ENCODE measurements at regions of chr12 and their contacts with region 1.

Region 1: GRCh38 chr12:52884526-52885293 is 20.2 kb downstream of the KRT8 start:
- DNase-seq: peak; percentile 74
- ATAC-seq: peak; percentile 73
- H3K4me3 ChIP-seq: no peak overlapping the region
- H3K4me3 Mint-ChIP-seq: no peak overlapping the region
- H3K27ac ChIP-seq: no peak overlapping the region
- H3K27ac Mint-ChIP-seq: no peak overlapping the region
- H3K4me1 ChIP-seq: peaks cover 5% of the 10 kb centered on the region in 2 donors
- H3K4me1 Mint-ChIP-seq: peaks cover 7% of the 10 kb centered on the region
- H3K27me3 ChIP-seq: peaks cover 0 to 19% (median 2%) of the 10 kb centered on the region in 4 experiments
- H3K27me3 Mint-ChIP-seq: peaks cover 31% of the 10 kb centered on the region
- CTCF ChIP-seq: peak; percentile 88

Region 2: GRCh38 chr12:52307836-52308805 is 576.6 kb before region 1 on chr12:
- CTCF ChIA-PET with region 1: no interaction called
- POLR2A ChIA-PET with region 1: no interaction called
- intact Hi-C with region 1: no loop called
- DNase-seq: no peak
- ATAC-seq: no peak
- H3K4me3 ChIP-seq: no peak overlapping the region
- H3K4me3 Mint-ChIP-seq: no peak overlapping the region
- H3K27ac ChIP-seq: no peak overlapping the region
- H3K27ac Mint-ChIP-seq: no peak overlapping the region
- H3K4me1 ChIP-seq: no peaks in the 10 kb centered on the region
- H3K4me1 Mint-ChIP-seq: peaks cover 3% of the 10 kb centered on the region
- H3K27me3 ChIP-seq: peaks cover 0 to 38% (median 11%) of the 10 kb centered on the region in 4 experiments
- H3K27me3 Mint-ChIP-seq: peaks cover 53% of the 10 kb centered on the region
- CTCF ChIP-seq: no peak

Region 3: GRCh38 chr12:52598966-52599365 is 285.7 kb before region 1 on chr12:
- CTCF ChIA-PET with region 1: no interaction called
- POLR2A ChIA-PET with region 1: no interaction called
- intact Hi-C with region 1: no loop called
- DNase-seq: no peak
- ATAC-seq: no peak
- H3K4me3 ChIP-seq: no peak overlapping the region
- H3K4me3 Mint-ChIP-seq: no peak overlapping the region
- H3K27ac ChIP-seq: no peak overlapping the region
- H3K27ac Mint-ChIP-seq: no peak overlapping the region
- H3K4me1 ChIP-seq: no peaks in the 10 kb centered on the region
- H3K4me1 Mint-ChIP-seq: no peaks in the 10 kb centered on the region
- H3K27me3 ChIP-seq: peaks cover 0 to 14% (median 6%) of the 10 kb centered on the region in 4 experiments
- H3K27me3 Mint-ChIP-seq: peaks cover 44% of the 10 kb centered on the region
- CTCF ChIP-seq: no peak

Region 4: GRCh38 chr12:52807544-52808470 is 76.9 kb before region 1 on chr12:
- CTCF ChIA-PET with region 1: no interaction called
- POLR2A ChIA-PET with region 1: no interaction called
- intact Hi-C with region 1: no loop called
- DNase-seq: no peak
- ATAC-seq: no peak
- H3K4me3 ChIP-seq: no peak overlapping the region
- H3K4me3 Mint-ChIP-seq: no peak overlapping the region
- H3K27ac ChIP-seq: no peak overlapping the region
- H3K27ac Mint-ChIP-seq: no peak overlapping the region
- H3K4me1 ChIP-seq: no peaks in the 10 kb centered on the region
- H3K4me1 Mint-ChIP-seq: no peaks in the 10 kb centered on the region
- H3K27me3 ChIP-seq: no peaks in the 10 kb centered on the region
- H3K27me3 Mint-ChIP-seq: peaks cover 28% of the 10 kb centered on the region
- CTCF ChIP-seq: no peak

Region 5: DNA sequence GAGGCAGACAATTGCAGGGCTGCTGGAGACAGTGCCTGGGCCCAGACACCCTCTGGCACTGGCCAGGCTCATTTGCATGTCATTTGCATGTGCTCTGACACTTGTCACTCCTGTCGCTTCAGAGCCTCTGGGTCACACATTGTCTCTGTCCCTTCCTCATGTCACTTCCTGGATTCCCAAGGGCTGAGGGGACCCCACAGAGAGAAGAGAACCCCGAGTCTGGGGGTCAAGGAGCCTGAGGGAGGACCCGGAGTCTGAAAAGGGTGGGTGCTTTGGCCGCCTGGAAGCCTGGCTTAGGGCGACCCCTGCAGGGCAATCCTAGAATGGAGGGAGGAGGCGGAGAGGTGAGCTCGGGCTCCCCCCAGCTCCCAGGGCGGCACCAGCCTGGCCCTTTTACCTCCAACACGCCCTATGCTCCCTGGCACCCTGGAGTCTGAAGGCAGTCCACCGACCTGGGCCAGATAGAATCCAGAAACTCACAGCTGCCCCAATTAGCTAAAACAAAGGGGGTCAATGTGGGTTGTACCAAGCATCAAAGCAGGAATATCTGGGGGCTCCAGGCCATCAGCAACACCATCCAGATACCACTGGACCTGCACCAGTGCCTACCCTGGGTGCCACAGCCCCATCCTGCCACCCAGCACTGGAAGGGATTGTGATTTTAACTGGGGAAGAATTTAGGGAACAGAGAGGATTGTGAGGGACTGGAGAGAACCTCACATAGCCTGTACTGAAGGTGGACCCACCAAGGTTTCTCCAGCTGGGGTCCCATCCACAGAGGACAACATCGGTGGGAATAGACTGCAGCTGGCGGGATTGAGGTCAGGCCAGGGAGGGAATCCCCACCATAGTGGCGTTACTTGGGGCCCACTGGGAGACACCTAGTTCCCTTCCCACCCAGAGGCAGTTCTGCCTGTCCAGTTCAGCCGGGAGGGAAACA is 14.1 kb before region 1 on chr12:
- CTCF ChIA-PET with region 1: interaction called, 22 read pairs
- POLR2A ChIA-PET with region 1: no interaction called
- intact Hi-C with region 1: no loop called
- DNase-seq: peak; percentile 73
- ATAC-seq: peak; percentile 51
- H3K4me3 ChIP-seq: no peak overlapping the region
- H3K4me3 Mint-ChIP-seq: peak overlapping the region; percentile 6
- H3K27ac ChIP-seq: no peak overlapping the region
- H3K27ac Mint-ChIP-seq: no peak overlapping the region
- H3K4me1 ChIP-seq: peaks cover 25 to 32% of the 10 kb centered on the region in 2 donors
- H3K4me1 Mint-ChIP-seq: peaks cover 37% of the 10 kb centered on the region
- H3K27me3 ChIP-seq: peaks cover 0 to 19% (median 4%) of the 10 kb centered on the region in 4 experiments
- H3K27me3 Mint-ChIP-seq: peaks cover 13% of the 10 kb centered on the region
- CTCF ChIP-seq: peak; percentile 75

Region 6: DNA sequence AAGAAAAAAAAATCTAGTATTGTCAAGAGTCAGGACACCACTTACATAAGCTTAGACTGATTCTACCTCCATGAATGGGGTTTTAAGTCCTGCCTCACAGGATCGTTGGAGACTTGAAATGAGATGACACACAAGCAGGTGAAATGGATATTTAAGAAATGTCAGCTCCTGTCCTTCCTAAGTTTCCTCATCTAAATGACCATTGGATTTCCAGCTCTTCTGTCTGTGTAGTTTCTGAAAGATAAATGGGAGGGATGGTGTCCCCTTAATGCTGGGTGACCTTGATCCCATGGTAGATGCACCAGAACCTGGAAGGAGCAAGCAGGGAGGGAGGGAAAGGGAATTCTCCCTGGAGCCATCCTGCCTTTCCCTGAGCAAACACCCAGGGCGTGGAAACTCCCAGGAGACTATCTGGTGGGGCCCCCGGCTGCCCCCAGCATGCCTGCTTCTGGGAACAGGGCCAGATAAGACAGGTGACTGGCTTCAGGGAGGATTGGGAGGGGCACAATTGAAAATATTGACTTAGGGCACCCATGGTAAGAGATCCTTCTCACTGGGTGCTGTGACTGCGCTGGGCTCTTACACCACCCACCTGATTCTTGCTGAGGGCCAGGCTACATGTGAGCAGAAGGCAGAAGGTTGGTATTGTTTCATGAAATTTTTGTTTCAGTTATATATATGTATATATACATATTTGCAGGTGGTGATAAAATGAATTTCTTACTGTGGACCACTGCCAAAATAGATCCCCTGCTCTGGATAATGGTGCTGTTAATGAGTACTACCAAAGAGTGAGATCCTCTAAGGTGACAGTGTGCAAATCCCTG is 10.6 kb after region 1 on chr12:
- CTCF ChIA-PET with region 1: interaction called, 29 read pairs
- POLR2A ChIA-PET with region 1: no interaction called
- intact Hi-C with region 1: no loop called
- DNase-seq: no peak
- ATAC-seq: no peak
- H3K4me3 ChIP-seq: no peak overlapping the region
- H3K4me3 Mint-ChIP-seq: no peak overlapping the region
- H3K27ac ChIP-seq: no peak overlapping the region
- H3K27ac Mint-ChIP-seq: no peak overlapping the region
- H3K4me1 ChIP-seq: no peaks in the 10 kb centered on the region
- H3K4me1 Mint-ChIP-seq: no peaks in the 10 kb centered on the region
- H3K27me3 ChIP-seq: peaks cover 0 to 2% (median 0%) of the 10 kb centered on the region in 4 experiments
- H3K27me3 Mint-ChIP-seq: peaks cover 15% of the 10 kb centered on the region
- CTCF ChIP-seq: no peak

Region 7: GRCh38 chr12:52900571-52901141 is 15.9 kb after region 1 on chr12:
- CTCF ChIA-PET with region 1: interaction called, 29 read pairs
- POLR2A ChIA-PET with region 1: no interaction called
- intact Hi-C with region 1: no loop called
- DNase-seq: no peak
- ATAC-seq: no peak
- H3K4me3 ChIP-seq: no peak overlapping the region
- H3K4me3 Mint-ChIP-seq: no peak overlapping the region
- H3K27ac ChIP-seq: no peak overlapping the region
- H3K27ac Mint-ChIP-seq: no peak overlapping the region
- H3K4me1 ChIP-seq: peaks cover 5 to 10% of the 10 kb centered on the region in 2 donors
- H3K4me1 Mint-ChIP-seq: peaks cover 3% of the 10 kb centered on the region
- H3K27me3 ChIP-seq: peaks cover 0 to 9% (median 2%) of the 10 kb centered on the region in 4 experiments
- H3K27me3 Mint-ChIP-seq: peaks cover 19% of the 10 kb centered on the region
- CTCF ChIP-seq: no peak

Region 8: DNA sequence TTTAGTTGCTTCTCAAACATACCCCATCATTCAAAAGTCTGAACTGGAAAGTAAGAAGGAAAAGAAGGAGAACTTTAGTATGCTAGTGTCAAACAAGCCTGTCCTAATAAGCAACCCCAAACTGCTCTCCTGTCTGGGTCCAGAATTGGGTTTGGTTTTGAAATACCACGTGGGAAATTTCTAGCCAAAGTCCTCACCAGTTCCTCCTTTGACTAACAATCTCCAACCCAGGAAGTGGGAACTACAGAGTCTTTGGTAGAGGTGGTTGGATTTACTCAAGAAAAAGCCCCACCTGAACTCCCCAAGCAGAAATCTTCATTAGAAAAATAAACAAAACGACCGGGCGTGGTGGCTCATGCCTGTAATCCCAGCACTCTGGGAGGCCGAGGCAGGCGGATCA is 104.2 kb after region 1 on chr12:
- CTCF ChIA-PET with region 1: interaction called, 22 read pairs
- POLR2A ChIA-PET with region 1: no interaction called
- intact Hi-C with region 1: no loop called
- DNase-seq: no peak
- ATAC-seq: no peak
- H3K4me3 ChIP-seq: no peak overlapping the region
- H3K4me3 Mint-ChIP-seq: no peak overlapping the region
- H3K27ac ChIP-seq: no peak overlapping the region
- H3K27ac Mint-ChIP-seq: no peak overlapping the region
- H3K4me1 ChIP-seq: no peaks in the 10 kb centered on the region
- H3K4me1 Mint-ChIP-seq: no peaks in the 10 kb centered on the region
- H3K27me3 ChIP-seq: peaks cover 0 to 2% (median 0%) of the 10 kb centered on the region in 4 experiments
- H3K27me3 Mint-ChIP-seq: peaks cover 7% of the 10 kb centered on the region
- CTCF ChIP-seq: no peak

Measured in B cell (primary cell).